Activated CD4-positive, alpha-beta T cell treated with anti-CD3 and anti-CD28 coated beads for 36 hours (primary cell): ENCODE measurements at regions of chr19 and their contacts with region 1.

Region 1: GRCh38 chr19:44164673-44165512 is at the start of gene ZNF226:
- DNase-seq: peak; percentile 87
- ATAC-seq: peak; percentile 89
- H3K4me3 Mint-ChIP-seq: peak within 1 kb of the TSS; percentile 87
- H3K27ac Mint-ChIP-seq: peak within 1 kb of the TSS; percentile 96
- H3K4me1 Mint-ChIP-seq: peaks cover 30% of the 10 kb centered on the region
- H3K27me3 Mint-ChIP-seq: no peaks in the 10 kb centered on the region
- total RNA-seq, gene ZNF226: 11.3 to 15.2 TPM

Region 2: DNA sequence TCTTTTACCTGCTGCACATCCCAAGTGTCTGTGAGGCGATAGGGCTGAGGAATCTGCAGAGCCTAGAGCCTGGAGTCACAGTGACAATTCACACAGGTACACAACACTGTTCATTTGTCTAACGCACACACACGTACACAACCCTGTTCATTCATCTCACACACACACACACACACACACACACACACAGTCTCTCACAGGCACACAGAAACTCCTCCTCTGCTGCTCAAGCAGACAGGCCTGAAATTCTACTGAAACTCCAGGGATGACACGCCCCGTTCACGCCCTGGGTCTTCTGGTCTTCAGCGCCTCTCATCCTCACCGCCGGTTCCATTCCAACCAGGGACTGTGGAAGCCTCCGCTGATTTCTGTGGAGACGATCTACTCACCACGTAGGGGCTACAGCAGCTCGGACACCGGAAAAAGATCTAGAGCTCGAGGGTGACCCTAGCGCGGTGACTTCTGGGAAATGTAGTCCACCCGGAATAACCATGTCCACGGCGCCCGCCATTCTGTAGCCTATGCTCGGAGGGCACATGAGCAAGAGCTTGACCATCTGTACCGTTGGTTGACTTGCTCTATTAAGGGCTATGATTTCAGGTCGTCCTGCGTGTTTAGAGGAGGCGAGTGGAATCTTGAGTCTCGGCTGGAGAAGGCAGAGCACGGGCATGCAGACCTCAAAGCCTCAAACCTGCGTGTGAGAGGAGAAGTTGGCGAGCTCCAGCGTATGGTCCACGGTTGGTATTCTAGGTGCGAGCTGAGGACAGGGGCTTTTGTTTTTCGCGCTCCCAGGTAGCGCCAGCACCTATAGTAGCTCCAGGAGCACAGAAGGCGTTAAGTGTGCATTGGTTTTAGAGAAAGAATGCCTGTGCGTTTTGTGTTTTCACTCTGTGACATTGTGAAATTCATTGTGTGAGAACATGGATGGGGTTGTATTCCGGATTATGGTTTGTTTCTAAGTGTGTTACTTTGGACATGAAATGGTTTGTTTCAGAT is 263.2 kb before region 1 on chr19:
- CTCF ChIA-PET with region 1: no interaction called
- POLR2A ChIA-PET with region 1: no interaction called
- intact Hi-C with region 1: loop called in 1 of 2 experiments (anchors 1 kb)
- DNase-seq: peak; percentile 82
- ATAC-seq: peak; percentile 96
- H3K4me3 Mint-ChIP-seq: peak overlapping the region; percentile 82
- H3K27ac Mint-ChIP-seq: peak overlapping the region; percentile 78
- H3K4me1 Mint-ChIP-seq: peaks cover 19% of the 10 kb centered on the region
- H3K27me3 Mint-ChIP-seq: no peaks in the 10 kb centered on the region

Region 3: DNA sequence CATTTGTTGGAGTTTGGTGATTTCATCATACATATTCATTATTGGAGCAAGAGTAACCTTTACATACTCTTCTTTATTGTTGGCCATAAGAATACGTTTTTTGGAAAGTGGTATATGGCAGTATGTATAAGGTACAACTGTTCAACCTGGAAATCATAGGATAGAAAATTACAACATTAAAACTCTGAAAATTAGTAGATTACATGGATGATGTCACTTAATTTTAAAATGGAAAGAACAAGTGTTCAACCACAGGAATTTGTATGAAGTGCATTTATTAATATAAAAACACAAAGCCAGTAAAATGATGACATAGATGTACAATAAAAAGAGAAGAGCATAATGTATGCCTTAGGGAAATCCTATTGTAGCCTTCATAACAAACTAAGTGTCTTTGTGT is 188.2 kb before region 1 on chr19:
- CTCF ChIA-PET with region 1: no interaction called
- POLR2A ChIA-PET with region 1: no interaction called
- intact Hi-C with region 1: no loop called
- DNase-seq: no peak
- ATAC-seq: no peak
- H3K4me3 Mint-ChIP-seq: no peak overlapping the region
- H3K27ac Mint-ChIP-seq: no peak overlapping the region
- H3K4me1 Mint-ChIP-seq: no peaks in the 10 kb centered on the region
- H3K27me3 Mint-ChIP-seq: no peaks in the 10 kb centered on the region

Region 4: GRCh38 chr19:44071824-44072542 is 92.9 kb before region 1 on chr19 and contains the start of gene ZNF284:
- CTCF ChIA-PET with region 1: no interaction called
- POLR2A ChIA-PET with region 1: no interaction called
- intact Hi-C with region 1: loop called in 1 of 2 experiments (anchors 1 kb)
- DNase-seq: peak; percentile 88
- ATAC-seq: peak; percentile 99
- H3K4me3 Mint-ChIP-seq: peak within 1 kb of the TSS; percentile 83
- H3K27ac Mint-ChIP-seq: peak within 1 kb of the TSS; percentile 78
- H3K4me1 Mint-ChIP-seq: peaks cover 23% of the 10 kb centered on the region
- H3K27me3 Mint-ChIP-seq: peaks cover 2% of the 10 kb centered on the region
- total RNA-seq, gene ZNF284: 2.1 TPM

Region 5: GRCh38 chr19:44207126-44207803 is 42.4 kb after region 1 on chr19:
- CTCF ChIA-PET with region 1: no interaction called
- POLR2A ChIA-PET with region 1: interaction called, 5 read pairs
- intact Hi-C with region 1: loop called (anchors 1 kb)
- DNase-seq: peak; percentile 84
- ATAC-seq: peak; percentile 93
- H3K4me3 Mint-ChIP-seq: peak overlapping the region; percentile 80
- H3K27ac Mint-ChIP-seq: peak overlapping the region; percentile 73
- H3K4me1 Mint-ChIP-seq: peaks cover 4% of the 10 kb centered on the region
- H3K27me3 Mint-ChIP-seq: peaks cover 2% of the 10 kb centered on the region

Region 6: GRCh38 chr19:44304659-44305193 is 139.8 kb after region 1 on chr19 and contains the start of gene ZNF235:
- CTCF ChIA-PET with region 1: no interaction called
- POLR2A ChIA-PET with region 1: interaction called, 3 read pairs
- intact Hi-C with region 1: loop called in 1 of 2 experiments (anchors 1 kb)
- DNase-seq: peak; percentile 87
- ATAC-seq: peak; percentile 97
- H3K4me3 Mint-ChIP-seq: peak within 1 kb of the TSS; percentile 83
- H3K27ac Mint-ChIP-seq: peak within 1 kb of the TSS; percentile 64
- H3K4me1 Mint-ChIP-seq: peaks cover 12% of the 10 kb centered on the region
- H3K27me3 Mint-ChIP-seq: no peaks in the 10 kb centered on the region
- total RNA-seq, gene ZNF235: 2.1 to 2.7 TPM

Region 7: GRCh38 chr19:45079063-45079910 is 914.4 kb after region 1 on chr19 and contains the start of gene GEMIN7:
- CTCF ChIA-PET with region 1: no interaction called
- POLR2A ChIA-PET with region 1: no interaction called
- intact Hi-C with region 1: loop called in 1 of 2 experiments (anchors 5 kb)
- DNase-seq: peak; percentile 90
- ATAC-seq: peak; percentile 65
- H3K4me3 Mint-ChIP-seq: peak within 1 kb of the TSS; percentile 99
- H3K27ac Mint-ChIP-seq: peak within 1 kb of the TSS; percentile 88
- H3K4me1 Mint-ChIP-seq: peaks cover 43% of the 10 kb centered on the region
- H3K27me3 Mint-ChIP-seq: no peaks in the 10 kb centered on the region
- total RNA-seq, gene GEMIN7: 35.4 to 35.5 TPM